ENCODE measurements at regions of chr5 and their contacts with region 1.

Region 1: GRCh38 chr5:37837414-37838032 is 2.3 kb downstream of the GDNF start:
- DNase-seq: peak; percentile 87
- CTCF ChIP-seq: peak; percentile 86

Region 2: DNA sequence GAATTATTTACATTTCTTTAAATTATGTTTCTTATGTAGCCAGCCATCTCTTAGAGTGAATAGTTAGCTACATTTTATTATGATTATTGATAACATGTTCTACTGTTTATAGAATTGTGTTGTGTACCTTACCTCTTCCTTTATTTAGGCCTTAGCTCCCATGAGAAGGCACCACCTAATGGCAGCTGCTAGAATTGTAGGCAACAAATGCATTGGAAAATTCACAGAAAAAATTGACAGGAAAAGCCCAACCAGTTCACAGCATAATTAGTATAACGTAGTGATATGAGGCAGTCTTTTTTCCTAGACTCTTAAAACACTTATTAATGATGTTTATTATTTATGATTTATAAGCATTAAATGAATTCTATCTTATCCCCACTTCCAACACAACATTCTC is 282.6 kb before region 1 on chr5:
- CTCF ChIA-PET with region 1: no interaction called
- POLR2A ChIA-PET with region 1: no interaction called
- DNase-seq: no peak
- CTCF ChIP-seq: peak; percentile 40

Region 3: DNA sequence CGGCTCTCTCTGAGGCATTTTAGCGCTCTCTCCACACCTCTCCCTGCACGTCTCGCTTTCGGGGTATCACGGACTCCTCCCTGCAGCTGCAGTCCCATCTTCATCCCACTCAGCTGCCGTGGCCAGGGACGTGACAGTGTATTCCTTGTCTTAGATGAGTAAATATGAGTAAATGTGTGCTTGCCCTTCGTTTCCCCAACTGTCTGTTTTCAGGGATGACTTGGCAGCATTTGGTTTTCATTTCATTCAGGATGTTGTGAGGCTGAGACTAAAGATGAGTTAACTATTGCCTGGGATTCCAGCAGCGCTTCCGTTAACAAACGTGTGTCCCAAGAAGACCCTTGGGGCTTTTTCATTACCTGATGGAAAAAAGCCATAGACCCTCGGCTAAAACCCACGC is 27.2 kb before region 1 on chr5:
- CTCF ChIA-PET with region 1: interaction called, 12 read pairs
- POLR2A ChIA-PET with region 1: no interaction called
- DNase-seq: no peak
- CTCF ChIP-seq: no peak

Measured in GM10248 (cell line).